ENCODE measurements at regions of chr7 and their contacts with region 1.

Region 1: DNA sequence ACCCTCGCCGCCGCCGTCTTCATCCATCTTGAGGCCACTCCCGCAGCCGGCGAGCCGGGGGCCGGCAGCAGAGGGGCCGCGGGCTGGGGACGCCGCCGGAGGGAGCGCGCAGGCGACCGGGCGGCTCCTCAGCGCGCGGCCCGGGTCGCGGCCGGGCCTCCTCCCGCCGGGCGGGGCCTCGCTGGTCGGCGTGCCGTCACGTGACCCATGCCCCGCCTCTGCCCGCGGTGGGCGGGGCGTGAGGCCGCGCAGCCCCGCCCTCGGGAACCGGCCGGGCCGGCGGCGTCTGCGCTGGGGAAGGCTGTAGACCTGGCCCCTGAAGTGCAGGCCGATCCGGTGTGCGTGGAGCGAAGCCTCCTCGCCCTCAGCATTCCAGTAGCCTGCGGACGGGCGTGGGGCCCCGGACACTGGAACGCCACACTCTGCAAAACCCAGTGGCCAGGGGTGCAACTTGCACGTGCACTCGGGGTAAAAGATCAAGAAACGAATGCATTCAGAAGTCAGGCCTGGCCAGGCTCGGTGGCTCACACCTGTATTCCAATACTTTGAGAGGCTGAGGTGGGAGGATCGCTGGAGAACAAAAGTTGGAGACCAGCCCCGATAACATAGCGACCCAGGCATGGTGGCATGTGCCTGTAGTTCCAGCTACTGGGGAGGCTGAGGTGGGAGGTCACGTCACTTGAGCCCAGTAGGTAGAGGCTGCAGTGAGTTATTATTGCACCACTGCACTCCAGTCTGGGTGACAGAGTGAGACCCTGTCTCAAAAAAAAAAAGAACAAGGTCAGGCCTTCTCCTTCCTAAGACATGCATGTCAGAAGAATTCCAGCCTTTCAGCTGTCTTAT is at the start of gene CYTH3:
- DNase-seq: peak; percentile 93
- total RNA-seq, gene CYTH3: 24.9 TPM

Region 2: GRCh38 chr7:6228361-6229229 is 44.1 kb before region 1 on chr7:
- intact Hi-C with region 1: loop called (anchors 5 kb)
- DNase-seq: no peak

Measured in cardiac septum (tissue), 1 donor.